Activated CD4-positive, alpha-beta memory T cell treated with anti-CD3 and anti-CD28 coated beads for 36 hours (primary cell): ENCODE measurements at regions of chr17 and their contacts with region 1.

Region 1: GRCh38 chr17:7572588-7573323 is 6.7 kb upstream of the CD68 start:
- DNase-seq: peak; percentile 100
- H3K4me3 Mint-ChIP-seq: peak overlapping the region; percentile 99
- H3K27ac Mint-ChIP-seq: peak overlapping the region; percentile 100
- H3K4me1 Mint-ChIP-seq: peaks cover 50% of the 10 kb centered on the region
- H3K27me3 Mint-ChIP-seq: peaks cover 2% of the 10 kb centered on the region

Region 2: GRCh38 chr17:7344399-7344798 is 228.4 kb before region 1 on chr17:
- CTCF ChIA-PET with region 1: no interaction called
- POLR2A ChIA-PET with region 1: no interaction called
- intact Hi-C with region 1: no loop called
- DNase-seq: no peak
- H3K4me3 Mint-ChIP-seq: no peak overlapping the region
- H3K27ac Mint-ChIP-seq: no peak overlapping the region
- H3K4me1 Mint-ChIP-seq: peaks cover 11% of the 10 kb centered on the region
- H3K27me3 Mint-ChIP-seq: no peaks in the 10 kb centered on the region

Region 3: DNA sequence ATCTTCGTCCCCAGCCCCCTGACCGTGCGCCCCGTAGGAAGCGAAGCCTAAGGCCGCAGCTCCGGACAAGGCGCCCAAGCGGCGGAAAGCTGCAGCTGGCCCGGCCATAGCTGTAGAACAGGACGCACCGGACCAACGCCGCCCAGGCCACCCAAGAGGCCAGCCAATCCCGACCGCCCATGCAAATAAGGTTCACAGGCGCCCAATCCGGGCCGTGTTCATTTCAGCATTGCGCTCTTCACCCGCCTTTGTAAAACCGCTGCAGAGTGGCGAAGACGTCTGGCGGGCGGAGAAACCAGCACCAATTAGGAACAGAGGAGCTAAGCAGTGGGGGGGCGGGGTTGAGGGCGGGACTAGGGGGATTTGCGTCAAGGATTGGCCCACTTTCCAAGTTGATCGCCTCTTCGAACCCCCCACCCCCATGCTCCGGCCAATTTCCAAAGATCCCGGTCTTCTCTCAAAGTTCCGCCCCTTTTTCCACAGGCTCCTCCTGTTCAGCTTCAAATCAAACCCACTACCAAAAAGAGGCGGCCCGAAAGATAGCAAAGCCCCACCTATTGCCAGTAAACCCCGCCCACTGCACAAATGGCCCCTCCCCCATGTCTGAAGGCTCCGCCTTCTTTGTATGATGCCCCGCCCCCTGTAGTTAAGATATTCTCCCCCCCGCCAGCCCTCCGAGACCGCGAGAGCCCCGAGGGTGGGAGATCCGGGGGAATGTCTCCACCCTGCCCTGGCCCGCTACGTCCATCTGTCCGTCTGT is 168.6 kb before region 1 on chr17 and contains the start of gene TMEM256:
- CTCF ChIA-PET with region 1: no interaction called
- POLR2A ChIA-PET with region 1: no interaction called
- intact Hi-C with region 1: loop called (anchors 1 kb)
- DNase-seq: peak; percentile 99
- H3K4me3 Mint-ChIP-seq: peak within 1 kb of the TSS; percentile 97
- H3K27ac Mint-ChIP-seq: peak within 1 kb of the TSS; percentile 92
- H3K4me1 Mint-ChIP-seq: peaks cover 25% of the 10 kb centered on the region
- H3K27me3 Mint-ChIP-seq: no peaks in the 10 kb centered on the region
- total RNA-seq, gene TMEM256: 87.0 to 88.5 TPM

Region 4: DNA sequence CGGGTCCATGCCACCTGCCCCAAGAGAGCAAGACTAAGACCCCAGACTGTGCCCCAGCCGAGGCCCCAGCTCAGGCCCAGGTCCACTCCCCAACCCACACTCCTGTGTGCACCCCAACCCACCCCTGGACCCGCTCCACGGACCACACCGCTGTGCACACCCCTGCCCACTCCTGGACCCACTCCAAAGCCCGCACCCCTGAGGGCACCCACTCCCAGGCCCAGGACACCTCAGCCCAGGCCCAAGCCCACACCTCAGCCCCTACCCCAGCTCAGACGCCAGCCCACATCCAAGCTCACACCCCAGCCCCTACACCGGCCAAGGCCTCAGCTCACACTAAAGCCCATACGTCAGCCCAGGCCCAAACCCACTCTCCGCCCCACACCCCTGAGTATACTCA is 143.0 kb before region 1 on chr17:
- CTCF ChIA-PET with region 1: no interaction called
- POLR2A ChIA-PET with region 1: no interaction called
- intact Hi-C with region 1: no loop called
- DNase-seq: no peak
- H3K4me3 Mint-ChIP-seq: no peak overlapping the region
- H3K27ac Mint-ChIP-seq: no peak overlapping the region
- H3K4me1 Mint-ChIP-seq: no peaks in the 10 kb centered on the region
- H3K27me3 Mint-ChIP-seq: peaks cover 2% of the 10 kb centered on the region

Region 5: GRCh38 chr17:7583253-7584109 is 10.7 kb after region 1 on chr17 and contains the start of gene MPDU1:
- CTCF ChIA-PET with region 1: interaction called, 4 read pairs
- POLR2A ChIA-PET with region 1: interaction called, 61 read pairs
- intact Hi-C with region 1: loop called (anchors 1 kb)
- DNase-seq: peak; percentile 98
- H3K4me3 Mint-ChIP-seq: peak within 1 kb of the TSS; percentile 95
- H3K27ac Mint-ChIP-seq: peak within 1 kb of the TSS; percentile 100
- H3K4me1 Mint-ChIP-seq: peaks cover 57% of the 10 kb centered on the region
- H3K27me3 Mint-ChIP-seq: no peaks in the 10 kb centered on the region
- total RNA-seq, gene MPDU1: 52.6 to 52.9 TPM